Activated CD4-positive, alpha-beta T cell treated with anti-CD3 and anti-CD28 coated beads for 36 hours (primary cell): ENCODE measurements at regions of chr22 and their contacts with region 1.

Region 1: GRCh38 chr22:37244114-37244921 is at the start of gene RAC2:
- DNase-seq: peak; percentile 97
- ATAC-seq: peak; percentile 60
- H3K4me3 Mint-ChIP-seq: peak within 1 kb of the TSS; percentile 92
- H3K27ac Mint-ChIP-seq: peak within 1 kb of the TSS; percentile 94
- H3K4me1 Mint-ChIP-seq: peaks cover 47% of the 10 kb centered on the region
- H3K27me3 Mint-ChIP-seq: no peaks in the 10 kb centered on the region
- total RNA-seq, gene RAC2: 692 to 930 TPM

Region 2: GRCh38 chr22:36528795-36529751 is 715.2 kb before region 1 on chr22 and contains the start of gene EIF3D:
- CTCF ChIA-PET with region 1: no interaction called
- POLR2A ChIA-PET with region 1: no interaction called
- intact Hi-C with region 1: loop called in 1 of 2 experiments (anchors 1 kb)
- DNase-seq: peak; percentile 99
- ATAC-seq: peak; percentile 96
- H3K4me3 Mint-ChIP-seq: peak within 1 kb of the TSS; percentile 82
- H3K27ac Mint-ChIP-seq: peak within 1 kb of the TSS; percentile 99
- H3K4me1 Mint-ChIP-seq: peaks cover 25% of the 10 kb centered on the region
- H3K27me3 Mint-ChIP-seq: no peaks in the 10 kb centered on the region
- total RNA-seq, gene EIF3D: 359 to 403 TPM

Region 3: DNA sequence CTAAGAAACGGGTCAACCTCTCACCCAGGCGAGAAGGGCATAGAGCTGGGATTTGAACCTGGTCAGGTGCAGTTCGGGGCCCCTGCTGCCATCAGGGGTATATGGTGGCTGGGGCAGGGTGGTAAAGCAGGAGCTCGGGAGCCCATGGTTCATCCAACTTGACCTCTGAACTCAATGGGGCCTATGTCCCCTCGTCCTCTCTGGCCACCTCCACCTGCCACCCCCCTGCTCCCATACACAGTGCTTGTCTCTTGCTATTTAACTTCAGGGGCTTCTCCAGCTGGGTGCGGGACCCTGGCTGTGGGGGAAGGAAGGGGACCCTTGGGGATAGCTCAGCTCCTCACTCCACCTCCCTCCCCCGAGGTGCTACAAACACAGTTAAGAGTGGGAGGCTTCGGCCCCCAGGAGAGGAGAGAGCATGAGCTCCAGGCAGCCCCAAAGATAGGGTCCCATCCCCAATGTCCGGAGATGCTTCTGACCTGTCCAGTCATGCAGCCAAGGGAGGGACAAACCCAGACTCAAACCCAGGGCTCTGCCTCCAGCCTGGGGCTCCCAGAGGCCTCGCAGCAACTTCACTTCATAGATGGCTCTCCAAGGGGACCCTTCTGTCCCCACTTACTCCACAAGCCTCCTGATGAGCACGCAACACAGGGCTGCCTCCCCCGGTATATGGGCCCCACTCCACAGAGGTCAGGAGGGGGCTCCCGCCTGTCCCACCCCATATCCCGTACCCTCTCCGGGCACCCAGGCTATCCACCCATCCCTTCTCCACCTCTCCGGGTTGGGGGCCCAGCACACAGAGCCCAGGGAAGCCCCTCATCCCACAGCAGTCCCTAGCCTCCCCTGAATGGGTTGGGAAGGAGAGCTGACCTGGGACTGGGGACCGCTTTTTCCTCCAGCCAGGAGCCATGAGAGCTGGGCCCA is 95.3 kb before region 1 on chr22:
- CTCF ChIA-PET with region 1: interaction called, 5 read pairs
- POLR2A ChIA-PET with region 1: interaction called, 14 read pairs
- intact Hi-C with region 1: no loop called
- DNase-seq: no peak
- ATAC-seq: no peak
- H3K4me3 Mint-ChIP-seq: peak overlapping the region; percentile 84
- H3K27ac Mint-ChIP-seq: peak overlapping the region; percentile 91
- H3K4me1 Mint-ChIP-seq: peaks cover 56% of the 10 kb centered on the region
- H3K27me3 Mint-ChIP-seq: no peaks in the 10 kb centered on the region

Region 4: GRCh38 chr22:37229805-37230672 is 14.3 kb before region 1 on chr22:
- CTCF ChIA-PET with region 1: interaction called, 70 read pairs
- POLR2A ChIA-PET with region 1: interaction called, 55 read pairs
- intact Hi-C with region 1: loop called (anchors 1 kb)
- DNase-seq: peak; percentile 97
- ATAC-seq: peak; percentile 69
- H3K4me3 Mint-ChIP-seq: peak overlapping the region; percentile 92
- H3K27ac Mint-ChIP-seq: peak overlapping the region; percentile 99
- H3K4me1 Mint-ChIP-seq: peaks cover 90% of the 10 kb centered on the region
- H3K27me3 Mint-ChIP-seq: no peaks in the 10 kb centered on the region

Region 5: DNA sequence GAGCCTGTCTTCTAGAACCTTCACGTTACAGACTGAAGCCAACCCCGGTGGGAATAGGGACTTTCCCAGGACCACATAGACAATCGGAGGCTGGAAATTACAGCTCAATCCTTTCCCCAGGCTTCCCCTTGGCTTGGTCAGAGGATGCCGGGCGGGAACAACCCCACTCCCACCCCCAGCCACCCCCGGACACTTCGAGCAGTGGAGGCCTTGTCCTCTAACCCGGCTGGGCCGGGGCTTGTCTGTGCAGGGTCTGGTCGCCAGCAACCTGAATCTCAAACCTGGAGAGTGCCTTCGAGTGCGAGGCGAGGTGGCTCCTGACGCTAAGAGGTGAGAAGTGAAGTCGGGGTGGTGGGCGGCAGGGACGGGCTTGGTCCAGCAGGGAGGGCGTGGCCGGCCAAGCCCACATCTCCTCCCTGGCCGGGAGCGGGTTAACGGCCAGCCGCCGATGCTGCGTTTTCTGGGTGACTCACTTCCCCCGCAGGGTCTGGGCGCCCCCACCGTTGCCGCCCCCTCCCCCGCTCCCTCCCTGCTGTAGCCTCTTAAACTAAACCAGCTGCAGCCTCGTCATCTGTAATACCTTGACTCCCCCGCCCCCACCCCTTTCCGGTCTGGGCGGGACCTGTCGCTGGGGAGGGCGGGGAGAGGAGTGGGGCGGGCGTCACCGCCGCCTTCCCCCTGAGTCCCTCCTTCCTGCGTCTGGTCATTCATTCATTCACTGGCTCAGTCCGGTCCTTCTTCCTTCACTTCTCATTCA is 432.6 kb after region 1 on chr22:
- CTCF ChIA-PET with region 1: no interaction called
- POLR2A ChIA-PET with region 1: no interaction called
- intact Hi-C with region 1: loop called in 1 of 2 experiments (anchors 5 kb)
- DNase-seq: peak; percentile 97
- ATAC-seq: peak; percentile 78
- H3K4me3 Mint-ChIP-seq: peak overlapping the region; percentile 89
- H3K27ac Mint-ChIP-seq: peak overlapping the region; percentile 96
- H3K4me1 Mint-ChIP-seq: peaks cover 57% of the 10 kb centered on the region
- H3K27me3 Mint-ChIP-seq: no peaks in the 10 kb centered on the region